Endothelial cell of umbilical vein (primary cell): ENCODE measurements at regions of chr4 and their contacts with region 1.

Region 1: DNA sequence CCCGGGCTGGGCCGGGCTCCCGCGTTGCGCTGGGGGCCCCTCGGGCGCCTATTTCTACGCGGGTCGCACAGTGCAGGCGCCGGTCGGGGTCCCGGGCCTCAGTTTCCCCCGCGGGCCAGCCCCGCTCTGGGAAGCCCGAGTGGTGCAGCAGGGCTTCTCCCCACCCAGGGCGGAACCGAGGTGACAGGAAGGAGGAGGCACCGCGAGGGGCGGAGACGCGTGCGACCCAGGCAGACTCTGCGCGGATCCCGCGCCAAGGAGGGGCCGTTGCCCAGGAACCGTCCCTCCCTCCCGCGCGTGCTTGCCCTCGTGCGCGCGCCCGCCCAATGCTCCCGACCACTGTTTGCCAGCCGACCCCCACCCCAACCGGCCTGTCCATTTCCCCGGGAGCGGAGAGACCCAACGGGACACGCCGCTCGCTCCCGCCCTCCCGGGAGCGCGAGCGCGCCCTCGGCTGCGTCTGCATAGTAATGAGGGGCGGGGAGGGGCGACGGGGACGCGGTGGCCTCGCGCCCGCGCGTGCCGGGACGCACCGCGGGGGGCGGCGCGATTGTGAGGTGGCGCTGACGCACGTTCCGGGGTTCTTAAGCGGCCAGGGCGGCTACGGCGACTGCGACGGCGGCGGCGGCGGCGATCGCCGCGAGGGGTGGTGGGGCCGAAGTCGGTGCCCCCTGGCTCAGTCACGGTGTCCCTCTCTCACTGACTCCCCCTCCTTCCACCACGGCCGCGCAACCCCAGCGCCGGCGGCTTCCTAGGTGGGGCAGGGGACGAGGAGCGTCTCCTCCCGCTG is at the start of gene CPEB2:
- DNase-seq: peak; percentile 97
- H3K4me3 ChIP-seq: peak within 1 kb of the TSS; percentile 77 to 93 (median 85)
- H3K27ac ChIP-seq: peak within 1 kb of the TSS; percentile 97
- H3K4me1 ChIP-seq: peaks cover 17% of the 10 kb centered on the region
- H3K27me3 ChIP-seq: no peaks in the 10 kb centered on the region
- CTCF ChIP-seq: no peak
- POLR2A ChIP-seq: peak; percentile 97
- total RNA-seq, gene CPEB2: 11.7 and 14.8 TPM in 2 replicates

Region 2: DNA sequence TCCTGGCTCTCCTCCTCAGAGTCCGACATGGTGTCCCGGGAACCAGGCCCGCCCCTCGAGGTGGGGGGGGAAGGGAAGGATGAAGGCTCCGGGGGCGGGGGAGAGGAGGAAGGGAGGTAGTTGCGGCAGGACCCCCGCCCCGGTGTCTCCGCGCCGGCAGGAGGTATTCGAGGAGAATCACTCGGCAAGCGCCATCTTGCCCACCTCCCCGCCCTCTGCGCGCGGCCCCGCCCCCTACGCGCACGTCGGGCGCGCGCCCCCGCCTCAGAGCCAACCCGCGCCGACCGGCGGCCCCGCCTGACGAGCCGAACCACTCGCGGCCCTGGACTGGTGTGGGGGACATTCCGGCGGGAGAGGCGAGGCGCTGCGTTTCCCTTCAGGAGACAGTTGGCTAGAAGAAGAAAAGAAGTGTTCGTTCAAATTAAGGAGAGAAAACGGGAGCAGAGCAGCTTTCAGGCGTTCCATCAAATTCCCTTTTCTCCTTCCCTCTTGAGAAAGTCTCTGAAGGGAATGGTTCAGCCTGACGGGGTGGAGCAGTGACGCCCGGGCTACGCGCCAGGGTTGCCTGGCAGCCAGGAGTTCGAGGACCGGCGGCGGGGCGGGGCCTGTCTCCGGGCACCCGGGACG is 1517.8 kb before region 1 on chr4 and contains the start of gene RAB28:
- CTCF ChIA-PET with region 1: no interaction called
- POLR2A ChIA-PET with region 1: no interaction called
- dilution Hi-C with region 1: no loop called
- intact Hi-C with region 1: loop called (anchors 5 kb)
- DNase-seq: peak; percentile 93
- H3K4me3 ChIP-seq: peak within 1 kb of the TSS; percentile 64 to 82 (median 66)
- H3K27ac ChIP-seq: peak within 1 kb of the TSS; percentile 97
- H3K4me1 ChIP-seq: peaks cover 11% of the 10 kb centered on the region
- H3K27me3 ChIP-seq: peaks cover 4 to 15% of the 10 kb centered on the region in 2 experiments
- CTCF ChIP-seq: no peak
- POLR2A ChIP-seq: no peak
- total RNA-seq, gene RAB28: 13.2 and 15.5 TPM in 2 replicates

Region 3: GRCh38 chr4:13654158-13654797 is 1347.8 kb before region 1 on chr4:
- CTCF ChIA-PET with region 1: interaction called, 29 read pairs
- POLR2A ChIA-PET with region 1: no interaction called
- dilution Hi-C with region 1: no loop called
- intact Hi-C with region 1: loop called (anchors 1 kb)
- DNase-seq: peak; percentile 64
- H3K4me3 ChIP-seq: peak overlapping the region in 2 of 3 experiments; percentile 23 to 26
- H3K27ac ChIP-seq: no peak overlapping the region
- H3K4me1 ChIP-seq: peaks cover 4% of the 10 kb centered on the region
- H3K27me3 ChIP-seq: peaks cover 4 to 5% of the 10 kb centered on the region in 2 experiments
- CTCF ChIP-seq: peak; percentile 69 to 90
- POLR2A ChIP-seq: no peak

Region 4: DNA sequence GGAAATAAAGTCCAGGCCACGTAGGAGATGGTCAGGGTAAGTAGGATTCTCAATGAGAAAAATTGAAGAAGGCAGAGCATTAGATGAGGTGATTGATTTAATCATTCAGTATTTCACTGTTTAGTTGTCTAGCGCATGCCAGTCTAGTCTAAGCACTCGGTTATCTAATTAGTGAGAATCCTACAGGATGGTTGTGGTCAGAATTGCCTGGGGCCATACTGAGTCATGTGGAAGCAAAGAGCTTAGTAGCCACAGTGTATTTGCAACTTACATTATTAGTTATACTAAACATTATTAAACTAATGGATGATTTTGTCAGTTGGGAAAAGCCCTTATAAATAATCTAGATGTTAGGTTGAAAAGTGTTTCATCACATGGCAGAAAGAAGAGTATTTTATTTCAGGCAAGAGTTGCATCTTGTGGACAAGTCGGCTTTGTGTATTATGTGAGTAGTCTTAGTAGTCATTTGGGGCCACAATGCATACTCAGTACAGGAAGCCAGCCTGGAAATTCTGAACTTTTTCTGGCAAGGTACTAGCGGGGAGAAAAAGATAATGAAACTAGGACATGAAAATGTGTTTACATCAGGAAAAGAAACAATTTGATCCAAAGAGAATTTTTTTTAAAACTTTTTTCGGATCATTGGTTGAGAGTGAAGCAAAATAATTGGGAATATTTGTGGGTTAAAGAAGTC is 32.2 kb after region 1 on chr4:
- CTCF ChIA-PET with region 1: interaction called, 9 read pairs
- POLR2A ChIA-PET with region 1: no interaction called
- dilution Hi-C with region 1: no loop called
- intact Hi-C with region 1: loop called (anchors 1 kb)
- DNase-seq: peak; percentile 69
- H3K4me3 ChIP-seq: peak overlapping the region in 1 of 3 experiments; percentile 21
- H3K27ac ChIP-seq: peak overlapping the region; percentile 32
- H3K4me1 ChIP-seq: peaks cover 36% of the 10 kb centered on the region
- H3K27me3 ChIP-seq: no peaks in the 10 kb centered on the region
- CTCF ChIP-seq: no peak
- POLR2A ChIP-seq: no peak

Region 5: GRCh38 chr4:15149839-15150476 is 147.9 kb after region 1 on chr4:
- CTCF ChIA-PET with region 1: interaction called, 3 read pairs
- POLR2A ChIA-PET with region 1: no interaction called
- dilution Hi-C with region 1: no loop called
- intact Hi-C with region 1: loop called (anchors 2 kb)
- DNase-seq: peak; percentile 53
- H3K4me3 ChIP-seq: no peak overlapping the region
- H3K27ac ChIP-seq: peak overlapping the region; percentile 12
- H3K4me1 ChIP-seq: peaks cover 9% of the 10 kb centered on the region
- H3K27me3 ChIP-seq: no peaks in the 10 kb centered on the region
- CTCF ChIP-seq: no peak
- POLR2A ChIP-seq: no peak

Region 6: GRCh38 chr4:15231265-15232091 is 229.4 kb after region 1 on chr4:
- CTCF ChIA-PET with region 1: no interaction called
- POLR2A ChIA-PET with region 1: no interaction called
- dilution Hi-C with region 1: no loop called
- intact Hi-C with region 1: loop called (anchors 5 kb)
- DNase-seq: peak; percentile 62
- H3K4me3 ChIP-seq: no peak overlapping the region
- H3K27ac ChIP-seq: no peak overlapping the region
- H3K4me1 ChIP-seq: no peaks in the 10 kb centered on the region
- H3K27me3 ChIP-seq: no peaks in the 10 kb centered on the region
- CTCF ChIP-seq: peak; percentile 60 to 61
- POLR2A ChIP-seq: no peak

Region 7: DNA sequence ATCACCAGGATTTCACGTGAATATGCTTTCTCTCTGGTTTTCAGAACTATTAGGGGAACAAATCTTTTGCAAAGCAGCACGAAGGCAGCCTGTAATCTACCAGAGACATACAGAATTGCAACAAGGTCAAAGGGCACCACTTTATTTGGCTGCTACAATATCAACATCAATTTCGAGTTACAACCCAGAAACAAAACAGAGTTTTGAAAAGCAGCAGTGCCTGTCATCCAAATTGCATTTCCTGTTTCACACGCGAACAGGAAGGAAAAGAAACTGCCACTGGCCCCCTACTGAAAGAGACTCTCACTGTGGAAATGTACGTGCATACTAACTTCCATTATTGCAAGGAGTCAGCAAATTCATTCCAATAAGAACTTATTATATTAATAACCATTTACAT is 408.7 kb after region 1 on chr4:
- CTCF ChIA-PET with region 1: no interaction called
- POLR2A ChIA-PET with region 1: no interaction called
- dilution Hi-C with region 1: no loop called
- intact Hi-C with region 1: no loop called
- DNase-seq: peak; percentile 26
- H3K4me3 ChIP-seq: no peak overlapping the region
- H3K27ac ChIP-seq: no peak overlapping the region
- H3K4me1 ChIP-seq: peaks cover 3% of the 10 kb centered on the region
- H3K27me3 ChIP-seq: no peaks in the 10 kb centered on the region
- CTCF ChIP-seq: no peak
- POLR2A ChIP-seq: no peak

Region 8: GRCh38 chr4:15655229-15656037 is 653.4 kb after region 1 on chr4 and contains the start of gene FBXL5:
- CTCF ChIA-PET with region 1: no interaction called
- POLR2A ChIA-PET with region 1: no interaction called
- dilution Hi-C with region 1: no loop called
- intact Hi-C with region 1: loop called (anchors 2 kb)
- DNase-seq: peak; percentile 86
- H3K4me3 ChIP-seq: peak within 1 kb of the TSS; percentile 78 to 97 (median 91)
- H3K27ac ChIP-seq: peak within 1 kb of the TSS; percentile 98
- H3K4me1 ChIP-seq: peaks cover 29% of the 10 kb centered on the region
- H3K27me3 ChIP-seq: no peaks in the 10 kb centered on the region
- CTCF ChIP-seq: no peak
- POLR2A ChIP-seq: peak; percentile 92
- total RNA-seq, gene FBXL5: 60.2 and 64.8 TPM in 2 replicates